BJ (cell line): ENCODE measurements at regions of chr1 and their contacts with region 1.

Region 1: DNA sequence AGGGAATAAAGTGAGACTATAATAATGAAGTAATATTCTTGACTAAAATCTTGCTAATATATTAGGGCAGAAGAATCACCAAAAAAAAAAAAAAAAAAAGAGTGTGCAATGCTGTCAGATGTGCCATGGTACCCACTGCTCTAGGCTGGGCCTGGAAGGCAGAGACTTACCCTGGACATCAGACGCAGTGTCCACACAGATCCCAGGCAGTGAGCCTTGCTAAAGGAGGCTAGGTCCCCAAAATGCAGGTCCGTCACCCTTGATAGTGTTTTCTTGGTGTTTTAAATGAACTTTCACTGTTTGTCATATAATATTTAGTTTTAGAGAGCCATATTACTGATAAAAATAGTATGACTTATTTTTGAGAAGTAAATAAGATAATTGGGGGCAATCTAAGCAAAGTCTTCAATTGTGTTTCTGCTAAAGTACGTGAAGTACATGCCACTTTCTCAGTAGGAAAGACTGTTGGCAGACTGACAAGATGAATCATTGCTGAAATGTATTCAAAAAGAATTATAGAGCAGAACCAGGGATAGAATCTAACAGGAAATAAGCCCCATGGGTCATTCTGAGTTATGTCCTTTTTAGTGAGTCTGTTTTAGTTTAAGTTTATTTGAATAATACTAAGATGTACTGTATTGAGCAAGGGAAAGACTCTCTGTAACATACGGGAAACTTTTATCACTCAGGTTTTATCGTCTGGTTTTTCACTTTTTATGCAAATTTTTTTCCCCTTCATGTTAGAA is 74.6 kb upstream of the PDC start:
- DNase-seq: peak; percentile 90
- H3K4me3 ChIP-seq: no peak overlapping the region
- H3K27me3 ChIP-seq: no peaks in the 10 kb centered on the region
- CTCF ChIP-seq: no peak

Region 2: GRCh38 chr1:185360714-185361113 is 1174.8 kb before region 1 on chr1:
- CTCF ChIA-PET with region 1: no interaction called
- POLR2A ChIA-PET with region 1: interaction called, 10 read pairs
- DNase-seq: no peak
- H3K4me3 ChIP-seq: no peak overlapping the region
- H3K27me3 ChIP-seq: no peaks in the 10 kb centered on the region
- CTCF ChIP-seq: no peak

Region 3: GRCh38 chr1:186617926-186618325 is 82.4 kb after region 1 on chr1:
- CTCF ChIA-PET with region 1: no interaction called
- POLR2A ChIA-PET with region 1: interaction called, 11 read pairs
- DNase-seq: no peak
- H3K4me3 ChIP-seq: no peak overlapping the region
- H3K27me3 ChIP-seq: no peaks in the 10 kb centered on the region
- CTCF ChIP-seq: no peak